Endothelial cell of umbilical vein (primary cell): ENCODE measurements at regions of chr15 and their contacts with region 1.

Region 1: DNA sequence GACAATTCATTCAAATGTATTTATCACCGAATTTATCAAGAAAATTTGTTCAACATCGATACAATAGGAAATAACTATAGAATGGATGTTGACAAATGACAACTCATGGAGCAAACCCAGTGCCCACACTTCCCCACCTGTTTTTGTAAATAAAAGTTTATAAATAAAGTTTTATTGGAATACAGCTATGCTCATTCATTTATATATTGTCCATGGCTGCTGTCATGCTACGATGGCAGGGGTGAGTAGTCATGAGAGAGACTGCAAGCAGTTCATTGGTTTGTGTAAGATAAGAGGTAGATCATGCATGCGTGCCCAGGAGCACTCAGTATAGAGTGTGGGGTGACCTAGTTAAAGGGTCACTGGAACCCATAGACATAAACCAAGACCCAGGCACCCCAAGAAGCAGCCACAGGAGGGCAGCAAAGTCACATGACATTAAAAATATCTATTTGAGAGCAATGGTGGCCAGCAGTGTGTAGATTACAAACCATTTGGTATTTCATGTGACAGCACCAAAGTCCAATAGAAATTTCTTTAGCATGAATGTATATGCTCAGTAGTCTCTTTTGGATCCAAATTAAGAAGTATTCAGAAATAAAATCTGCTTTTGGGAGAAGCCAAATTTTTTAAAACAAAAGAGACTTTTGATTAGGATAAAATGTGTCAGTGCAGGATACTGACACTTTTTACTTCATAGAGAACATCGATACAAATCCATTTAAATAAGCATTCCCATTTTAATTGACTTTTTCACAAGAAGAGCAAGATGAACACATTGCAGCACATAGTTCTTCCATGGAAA is 794.8 kb downstream of the MCTP2 start:
- DNase-seq: peak; percentile 78
- H3K4me3 ChIP-seq: no peak overlapping the region
- H3K27ac ChIP-seq: no peak overlapping the region
- H3K4me1 ChIP-seq: peaks cover 2% of the 10 kb centered on the region
- H3K27me3 ChIP-seq: no peaks in the 10 kb centered on the region
- CTCF ChIP-seq: peak; percentile 62 to 76
- POLR2A ChIP-seq: no peak

Region 2: DNA sequence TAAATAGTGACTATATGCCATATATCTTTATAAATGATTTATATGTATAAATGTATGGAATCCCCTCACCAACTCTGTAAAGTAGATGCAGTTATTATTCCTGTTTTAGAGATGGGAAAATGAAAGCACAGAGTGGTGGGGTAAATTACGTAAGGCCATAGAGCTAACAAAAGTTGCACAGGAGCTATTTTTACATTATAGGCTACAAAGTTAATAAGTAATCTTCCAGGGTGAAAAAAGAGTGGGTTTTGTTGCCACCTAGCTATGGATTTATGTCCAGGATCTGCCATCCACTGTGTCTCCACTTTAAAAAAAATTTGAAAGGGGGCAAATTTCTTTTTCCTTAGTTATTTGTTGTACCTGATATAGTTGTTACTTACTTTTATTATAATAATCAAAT is 559.1 kb before region 1 on chr15:
- CTCF ChIA-PET with region 1: no interaction called
- POLR2A ChIA-PET with region 1: no interaction called
- dilution Hi-C with region 1: no loop called
- intact Hi-C with region 1: no loop called
- DNase-seq: no peak
- H3K4me3 ChIP-seq: no peak overlapping the region
- H3K27ac ChIP-seq: no peak overlapping the region
- H3K4me1 ChIP-seq: no peaks in the 10 kb centered on the region
- H3K27me3 ChIP-seq: no peaks in the 10 kb centered on the region
- CTCF ChIP-seq: no peak
- POLR2A ChIP-seq: no peak

Region 3: GRCh38 chr15:94582369-94582768 is 443.8 kb before region 1 on chr15:
- CTCF ChIA-PET with region 1: interaction called, 79 read pairs
- POLR2A ChIA-PET with region 1: no interaction called
- dilution Hi-C with region 1: no loop called
- intact Hi-C with region 1: loop called (anchors 1 kb)
- DNase-seq: peak; percentile 85
- H3K4me3 ChIP-seq: no peak overlapping the region
- H3K27ac ChIP-seq: no peak overlapping the region
- H3K4me1 ChIP-seq: peaks cover 25% of the 10 kb centered on the region
- H3K27me3 ChIP-seq: no peaks in the 10 kb centered on the region
- CTCF ChIP-seq: peak; percentile 75 to 80
- POLR2A ChIP-seq: no peak

Region 4: DNA sequence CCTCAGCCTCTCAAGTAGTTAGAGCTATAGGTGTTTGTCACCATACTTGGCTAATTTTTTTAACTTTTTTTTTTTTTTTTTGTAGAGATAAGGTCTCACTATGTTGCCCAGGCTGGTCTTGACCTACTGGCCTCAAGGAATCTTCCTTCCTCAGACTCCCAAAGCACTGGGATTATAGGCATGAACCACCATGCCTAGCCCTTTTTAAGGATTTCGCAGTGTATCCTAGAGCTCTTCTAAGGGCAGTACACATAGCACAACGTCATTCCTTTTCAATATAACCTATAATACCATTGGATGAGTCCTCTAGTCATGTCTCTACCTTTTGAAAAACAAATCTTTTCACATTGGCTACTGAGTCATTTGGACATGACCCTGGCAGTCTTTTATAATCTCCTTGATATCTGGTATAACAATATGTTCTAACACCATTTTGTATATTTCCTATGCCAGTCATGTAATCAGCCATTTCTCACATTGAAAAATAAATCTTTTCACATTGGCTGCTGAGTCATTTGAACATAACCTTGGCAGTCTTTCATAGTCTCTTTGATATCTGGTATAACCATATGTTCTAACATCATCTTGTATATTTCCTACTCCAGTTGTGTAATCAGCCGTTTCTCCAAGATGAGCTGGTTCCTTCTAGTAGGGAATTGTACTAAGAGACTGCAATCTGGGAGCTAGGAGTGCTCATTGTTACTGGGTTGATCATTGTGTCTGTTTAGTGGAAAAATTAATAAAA is 150.0 kb after region 1 on chr15:
- CTCF ChIA-PET with region 1: interaction called, 14 read pairs
- POLR2A ChIA-PET with region 1: no interaction called
- dilution Hi-C with region 1: no loop called
- intact Hi-C with region 1: loop called (anchors 1 kb)
- DNase-seq: peak; percentile 94
- H3K4me3 ChIP-seq: no peak overlapping the region
- H3K27ac ChIP-seq: peak overlapping the region; percentile 95
- H3K4me1 ChIP-seq: peaks cover 30% of the 10 kb centered on the region
- H3K27me3 ChIP-seq: no peaks in the 10 kb centered on the region
- CTCF ChIP-seq: no peak
- POLR2A ChIP-seq: no peak

Region 5: GRCh38 chr15:95326431-95327182 is 300.5 kb after region 1 on chr15:
- CTCF ChIA-PET with region 1: interaction called, 3 read pairs
- POLR2A ChIA-PET with region 1: no interaction called
- dilution Hi-C with region 1: no loop called
- intact Hi-C with region 1: loop called (anchors 2 kb)
- DNase-seq: peak; percentile 75
- H3K4me3 ChIP-seq: peak overlapping the region; percentile 64 to 81 (median 65)
- H3K27ac ChIP-seq: peak overlapping the region; percentile 98
- H3K4me1 ChIP-seq: peaks cover 63% of the 10 kb centered on the region
- H3K27me3 ChIP-seq: no peaks in the 10 kb centered on the region
- CTCF ChIP-seq: peak in 1 of 2 donors; percentile 0
- POLR2A ChIP-seq: no peak

Region 6: DNA sequence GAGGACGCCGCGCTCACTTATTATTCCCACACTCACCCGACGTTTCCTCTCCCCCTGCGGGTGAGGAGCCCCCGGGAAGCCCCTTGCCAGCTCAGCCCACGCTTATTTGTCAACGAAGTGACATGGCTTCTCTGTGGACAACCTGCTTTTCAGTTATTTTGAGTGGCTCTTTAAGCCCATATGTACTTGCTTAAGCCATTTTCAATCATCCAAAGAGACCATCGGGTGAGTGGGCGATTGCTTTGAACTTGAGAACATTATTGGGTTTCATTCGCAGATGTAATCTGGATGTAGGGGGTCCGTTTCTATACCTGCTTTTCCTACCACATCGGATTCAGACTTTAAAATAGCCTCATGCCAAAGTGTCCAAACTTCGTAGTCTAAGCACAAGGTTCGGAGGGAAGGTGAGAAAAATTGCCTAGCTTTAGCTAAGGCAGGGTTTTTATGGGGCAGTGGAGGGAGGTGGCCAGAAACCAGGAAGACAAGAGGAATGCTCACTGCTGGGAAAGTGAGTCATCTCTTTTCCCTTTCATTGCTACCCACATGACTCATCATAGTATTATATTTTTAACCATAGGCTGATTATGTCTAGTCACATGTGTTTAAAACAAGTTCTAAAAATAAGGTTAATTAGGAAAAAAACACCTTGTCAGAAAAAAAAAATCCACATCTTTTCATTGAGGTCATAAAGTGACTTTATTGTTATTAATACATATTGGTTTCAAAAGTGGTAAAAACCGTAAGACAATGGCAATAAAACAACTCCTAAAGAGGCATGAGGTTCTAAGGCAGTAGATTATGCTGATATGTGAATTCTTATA is 531.3 kb after region 1 on chr15:
- CTCF ChIA-PET with region 1: no interaction called
- POLR2A ChIA-PET with region 1: no interaction called
- dilution Hi-C with region 1: no loop called
- intact Hi-C with region 1: loop called (anchors 5 kb)
- DNase-seq: peak; percentile 96
- H3K4me3 ChIP-seq: peak overlapping the region in 1 of 3 experiments; percentile 10
- H3K27ac ChIP-seq: peak overlapping the region; percentile 100
- H3K4me1 ChIP-seq: peaks cover 39% of the 10 kb centered on the region
- H3K27me3 ChIP-seq: no peaks in the 10 kb centered on the region
- CTCF ChIP-seq: no peak
- POLR2A ChIP-seq: no peak

Region 7: GRCh38 chr15:96585484-96586386 is 1559.6 kb after region 1 on chr15:
- CTCF ChIA-PET with region 1: no interaction called
- POLR2A ChIA-PET with region 1: no interaction called
- dilution Hi-C with region 1: no loop called
- intact Hi-C with region 1: loop called (anchors 2 kb)
- DNase-seq: peak; percentile 39
- H3K4me3 ChIP-seq: no peak overlapping the region
- H3K27ac ChIP-seq: no peak overlapping the region
- H3K4me1 ChIP-seq: no peaks in the 10 kb centered on the region
- H3K27me3 ChIP-seq: peaks cover 0 to 2% of the 10 kb centered on the region in 2 experiments
- CTCF ChIP-seq: peak in 1 of 2 donors; percentile 33
- POLR2A ChIP-seq: no peak